GM18951 (cell line): ENCODE measurements at regions of chr1 and their contacts with region 1.

Region 1: DNA sequence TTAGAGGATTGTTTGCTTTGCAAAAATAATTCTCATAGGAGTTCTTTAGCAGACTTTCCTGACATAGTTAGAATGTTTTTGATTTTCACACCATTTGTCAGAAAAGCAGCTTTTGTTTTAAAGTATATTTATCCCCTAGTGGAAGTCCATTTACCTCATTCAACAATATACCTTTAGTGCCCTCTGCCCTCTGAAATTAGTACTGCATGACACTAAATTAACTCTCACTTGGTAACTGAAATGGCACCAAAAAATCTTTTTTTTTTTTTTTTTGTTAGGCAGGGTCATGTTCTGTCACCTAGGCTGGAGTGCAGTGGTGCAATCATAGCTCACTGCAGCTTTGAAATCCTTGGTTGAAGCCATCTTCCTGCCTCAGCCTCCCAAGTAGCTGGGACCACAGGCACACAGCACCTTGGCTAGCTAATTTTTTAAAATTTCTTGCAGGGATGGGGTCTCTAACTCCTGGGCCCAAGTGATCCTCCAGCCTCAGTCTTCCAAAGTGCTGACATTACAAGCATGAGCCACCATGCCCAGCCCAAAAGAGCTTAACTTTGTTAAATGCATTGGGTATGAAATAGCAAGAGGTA is 13.6 kb downstream of the LRRC42 start:
- POLR2A ChIP-seq: no peak

Region 2: GRCh38 chr1:53851571-53852285 is 108.0 kb before region 1 on chr1:
- in situ Hi-C with region 1: loop called (anchors 10 kb)
- POLR2A ChIP-seq: no peak

Region 3: GRCh38 chr1:53889304-53890298 is 70.2 kb before region 1 on chr1 and contains the start of gene YIPF1:
- in situ Hi-C with region 1: loop called (anchors 5 kb)
- POLR2A ChIP-seq: peak; percentile 84

Region 4: DNA sequence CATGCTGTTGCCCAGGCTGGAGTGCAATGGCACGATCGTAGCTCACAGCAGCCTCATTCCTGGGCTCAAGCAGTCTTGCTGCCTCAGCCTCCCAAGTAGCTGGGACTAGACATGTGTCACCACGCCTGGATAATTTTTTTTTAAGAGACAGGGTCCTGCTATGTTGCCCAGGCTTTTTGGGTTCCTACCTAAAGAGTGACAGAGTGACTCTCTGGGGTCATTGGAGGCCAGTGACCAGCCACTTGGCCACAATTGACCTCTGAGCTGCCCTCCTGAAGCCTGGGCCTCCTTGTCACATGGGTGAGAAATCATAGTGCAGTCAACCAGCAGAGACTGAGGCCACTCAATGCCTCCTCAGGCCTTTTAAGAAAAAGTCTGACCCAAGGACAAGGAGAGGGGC is 60.0 kb before region 1 on chr1:
- in situ Hi-C with region 1: no loop called
- POLR2A ChIP-seq: no peak